Transverse colon (tissue), 4 donors: ENCODE measurements at regions of chr11 and their contacts with region 1.

Region 1: GRCh38 chr11:77820563-77821348 is at the starts of genes AAMDC and RSF1:
- DNase-seq: peak; percentile 99
- H3K4me3 ChIP-seq: peak within 1 kb of the TSS; percentile 95 to 100 (median 100)
- H3K27ac ChIP-seq: peak within 1 kb of the TSS; percentile 96 to 99 (median 98)
- H3K4me1 ChIP-seq: peaks cover 8 to 51% (median 16%) of the 10 kb centered on the region in 4 donors
- H3K27me3 ChIP-seq: no peaks in the 10 kb centered on the region
- CTCF ChIP-seq: peak; percentile 51 to 77 (median 66)
- EP300 ChIP-seq: no peak
- POLR2A ChIP-seq: peak; percentile 74
- total RNA-seq, gene AAMDC: 14.4 to 30.7 TPM in 2 of 4 donors, not detected in the others
- total RNA-seq, gene RSF1: 45.6 to 72.8 (median 58.1) TPM

Region 2: DNA sequence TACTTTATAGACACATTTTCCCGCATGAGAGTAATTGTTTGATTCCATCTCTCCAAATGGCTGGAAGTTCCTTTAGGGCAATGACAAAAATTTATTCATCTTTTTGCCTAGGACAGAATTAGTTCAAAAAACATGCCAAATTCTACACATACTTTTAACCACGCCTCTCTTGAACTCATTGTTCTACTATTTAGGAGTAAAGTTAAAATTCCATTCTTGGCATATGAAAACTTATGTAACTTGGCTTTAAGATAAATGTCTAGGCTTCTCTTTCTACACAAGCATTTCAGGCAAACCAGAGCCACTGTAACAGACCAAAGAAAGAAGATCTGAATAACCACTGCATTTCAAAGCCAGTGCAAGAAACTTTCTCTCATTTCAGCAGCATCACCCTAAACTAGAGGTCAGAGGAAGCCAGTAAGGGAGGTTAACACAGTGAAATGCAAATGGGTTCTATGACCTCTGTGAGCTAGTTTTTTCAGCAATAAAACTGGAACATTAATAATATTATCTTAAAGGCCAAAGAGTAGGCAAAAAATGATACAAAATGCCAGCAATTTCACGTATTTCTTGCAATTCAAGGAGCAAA is 73.3 kb before region 1 on chr11:
- in situ Hi-C with region 1: no loop called
- intact Hi-C with region 1: no loop called
- DNase-seq: no peak
- H3K4me3 ChIP-seq: no peak overlapping the region
- H3K27ac ChIP-seq: no peak overlapping the region
- H3K4me1 ChIP-seq: peaks cover 0 to 16% (median 0%) of the 10 kb centered on the region in 4 donors
- H3K27me3 ChIP-seq: no peaks in the 10 kb centered on the region
- CTCF ChIP-seq: no peak
- EP300 ChIP-seq: no peak
- POLR2A ChIP-seq: no peak

Region 3: GRCh38 chr11:77789061-77789730 is 31.6 kb before region 1 on chr11:
- in situ Hi-C with region 1: no loop called
- intact Hi-C with region 1: no loop called
- DNase-seq: no peak
- H3K4me3 ChIP-seq: no peak overlapping the region
- H3K27ac ChIP-seq: no peak overlapping the region
- H3K4me1 ChIP-seq: peaks cover 0 to 18% (median 0%) of the 10 kb centered on the region in 4 donors
- H3K27me3 ChIP-seq: no peaks in the 10 kb centered on the region
- CTCF ChIP-seq: no peak
- EP300 ChIP-seq: no peak
- POLR2A ChIP-seq: no peak

Region 4: GRCh38 chr11:77994412-77995362 is 173.9 kb after region 1 on chr11 and contains the start of gene INTS4:
- in situ Hi-C with region 1: loop called in 1 of 4 experiments (anchors 10 kb)
- intact Hi-C with region 1: no loop called
- DNase-seq: peak; percentile 99
- H3K4me3 ChIP-seq: peak within 1 kb of the TSS; percentile 49 to 80 (median 63)
- H3K27ac ChIP-seq: peak within 1 kb of the TSS; percentile 86 to 95 (median 91)
- H3K4me1 ChIP-seq: peaks cover 9 to 26% (median 16%) of the 10 kb centered on the region in 4 donors
- H3K27me3 ChIP-seq: no peaks in the 10 kb centered on the region
- CTCF ChIP-seq: no peak
- EP300 ChIP-seq: no peak
- POLR2A ChIP-seq: peak; percentile 47
- total RNA-seq, gene INTS4: 3.8 to 45.9 (median 31.5) TPM

Region 5: GRCh38 chr11:78202733-78203167 is 382.0 kb after region 1 on chr11:
- in situ Hi-C with region 1: no loop called
- intact Hi-C with region 1: no loop called
- DNase-seq: no peak
- H3K4me3 ChIP-seq: no peak overlapping the region
- H3K27ac ChIP-seq: peak overlapping the region in 2 of 4 donors; percentile 32 to 33
- H3K4me1 ChIP-seq: peaks cover 0 to 6% (median 0%) of the 10 kb centered on the region in 4 donors
- H3K27me3 ChIP-seq: no peaks in the 10 kb centered on the region
- CTCF ChIP-seq: no peak
- EP300 ChIP-seq: no peak
- POLR2A ChIP-seq: no peak